Activated CD4-positive, alpha-beta T cell treated with anti-CD3 and anti-CD28 coated beads for 36 hours (primary cell): ENCODE measurements at regions of chr10 and their contacts with region 1.

Region 1: GRCh38 chr10:4131407-4132228 is 346.6 kb upstream of the KLF6 start:
- DNase-seq: peak; percentile 44
- ATAC-seq: peak; percentile 85
- H3K4me3 Mint-ChIP-seq: no peak overlapping the region
- H3K27ac Mint-ChIP-seq: no peak overlapping the region
- H3K4me1 Mint-ChIP-seq: peaks cover 41% of the 10 kb centered on the region
- H3K27me3 Mint-ChIP-seq: peaks cover 11% of the 10 kb centered on the region

Region 2: GRCh38 chr10:3197348-3198003 is 934.1 kb before region 1 on chr10:
- CTCF ChIA-PET with region 1: interaction called, 3 read pairs
- POLR2A ChIA-PET with region 1: interaction called, 3 read pairs
- intact Hi-C with region 1: loop called in 1 of 2 experiments (anchors 2 kb)
- DNase-seq: peak; percentile 92
- ATAC-seq: peak; percentile 90
- H3K4me3 Mint-ChIP-seq: no peak overlapping the region
- H3K27ac Mint-ChIP-seq: no peak overlapping the region
- H3K4me1 Mint-ChIP-seq: peaks cover 11% of the 10 kb centered on the region
- H3K27me3 Mint-ChIP-seq: peaks cover 60% of the 10 kb centered on the region

Region 3: DNA sequence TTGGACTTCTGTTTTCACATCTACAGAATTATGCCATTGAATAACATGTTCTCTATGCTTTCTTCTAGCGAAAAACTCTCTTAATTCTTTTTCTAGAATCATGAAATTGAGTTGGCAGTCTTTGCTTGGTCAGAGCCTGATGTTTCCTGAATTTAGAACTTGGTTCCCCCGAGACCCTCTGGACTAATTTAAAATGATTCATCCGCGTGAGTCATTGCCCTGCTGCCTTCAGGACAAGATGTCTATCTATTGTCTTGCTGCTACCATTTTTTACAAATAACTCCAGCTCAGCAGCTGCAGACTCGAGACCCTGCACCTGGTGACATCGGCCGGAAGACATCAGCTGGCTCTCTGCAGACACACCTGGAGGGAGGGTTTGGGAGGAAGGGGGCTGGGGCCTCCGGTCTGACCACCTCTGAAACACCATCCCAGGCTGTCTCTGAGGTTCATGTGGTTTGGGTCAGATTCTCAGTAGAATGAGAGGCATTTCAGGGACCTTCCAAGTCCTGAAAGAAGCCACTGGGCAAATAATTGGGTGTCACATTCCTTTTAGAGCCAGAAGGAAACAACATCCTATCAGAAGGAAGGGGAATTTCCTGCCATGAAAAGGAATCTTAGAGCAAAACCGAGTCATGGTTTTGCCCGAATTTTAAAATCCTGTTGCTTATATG is 325.7 kb before region 1 on chr10:
- CTCF ChIA-PET with region 1: no interaction called
- POLR2A ChIA-PET with region 1: interaction called, 4 read pairs
- intact Hi-C with region 1: loop called (anchors 1 to 2 kb)
- DNase-seq: peak; percentile 59
- ATAC-seq: no peak
- H3K4me3 Mint-ChIP-seq: peak overlapping the region; percentile 46
- H3K27ac Mint-ChIP-seq: no peak overlapping the region
- H3K4me1 Mint-ChIP-seq: peaks cover 63% of the 10 kb centered on the region
- H3K27me3 Mint-ChIP-seq: no peaks in the 10 kb centered on the region

Region 4: GRCh38 chr10:3873728-3874461 is 257.7 kb before region 1 on chr10:
- CTCF ChIA-PET with region 1: no interaction called
- POLR2A ChIA-PET with region 1: no interaction called
- intact Hi-C with region 1: loop called in 1 of 2 experiments (anchors 5 kb)
- DNase-seq: no peak
- ATAC-seq: peak; percentile 27
- H3K4me3 Mint-ChIP-seq: peak overlapping the region; percentile 15
- H3K27ac Mint-ChIP-seq: peak overlapping the region; percentile 89
- H3K4me1 Mint-ChIP-seq: peaks cover 65% of the 10 kb centered on the region
- H3K27me3 Mint-ChIP-seq: no peaks in the 10 kb centered on the region

Region 5: DNA sequence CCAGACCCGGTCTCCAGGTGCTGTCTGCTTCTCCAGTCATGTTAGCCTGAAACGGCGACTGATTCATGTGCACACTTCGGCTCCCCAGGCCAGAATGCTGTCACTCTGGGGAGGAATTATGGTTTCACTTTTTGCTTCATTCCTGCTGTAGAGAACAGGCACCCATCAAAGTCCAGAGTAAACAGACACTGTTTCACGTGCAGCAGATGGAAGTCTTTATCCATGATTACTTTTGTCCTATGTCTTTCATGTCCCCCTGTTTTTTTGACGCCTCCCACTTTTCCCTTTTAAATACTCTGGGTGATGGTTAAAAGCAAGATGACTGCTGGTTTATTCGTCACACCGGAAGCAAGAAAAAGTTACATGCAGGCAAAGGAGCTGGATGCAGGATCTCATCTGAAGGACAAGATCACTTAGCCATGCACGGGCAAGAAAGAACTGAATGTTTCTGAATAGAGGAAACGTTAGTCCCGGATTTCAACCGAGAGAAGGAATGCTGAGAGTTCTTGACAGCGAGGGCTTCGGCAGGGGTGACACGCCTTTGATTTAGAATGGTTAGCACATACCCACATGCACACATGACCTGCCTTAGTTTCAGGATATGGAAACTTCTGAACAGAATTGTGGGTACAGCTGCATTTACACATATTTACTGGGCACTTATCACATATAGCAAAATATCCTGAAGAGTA is 96.6 kb before region 1 on chr10:
- CTCF ChIA-PET with region 1: no interaction called
- POLR2A ChIA-PET with region 1: no interaction called
- intact Hi-C with region 1: loop called in 1 of 2 experiments (anchors 5 kb)
- DNase-seq: peak; percentile 64
- ATAC-seq: peak; percentile 63
- H3K4me3 Mint-ChIP-seq: peak overlapping the region; percentile 49
- H3K27ac Mint-ChIP-seq: peak overlapping the region; percentile 90
- H3K4me1 Mint-ChIP-seq: peaks cover 30% of the 10 kb centered on the region
- H3K27me3 Mint-ChIP-seq: no peaks in the 10 kb centered on the region

Region 6: DNA sequence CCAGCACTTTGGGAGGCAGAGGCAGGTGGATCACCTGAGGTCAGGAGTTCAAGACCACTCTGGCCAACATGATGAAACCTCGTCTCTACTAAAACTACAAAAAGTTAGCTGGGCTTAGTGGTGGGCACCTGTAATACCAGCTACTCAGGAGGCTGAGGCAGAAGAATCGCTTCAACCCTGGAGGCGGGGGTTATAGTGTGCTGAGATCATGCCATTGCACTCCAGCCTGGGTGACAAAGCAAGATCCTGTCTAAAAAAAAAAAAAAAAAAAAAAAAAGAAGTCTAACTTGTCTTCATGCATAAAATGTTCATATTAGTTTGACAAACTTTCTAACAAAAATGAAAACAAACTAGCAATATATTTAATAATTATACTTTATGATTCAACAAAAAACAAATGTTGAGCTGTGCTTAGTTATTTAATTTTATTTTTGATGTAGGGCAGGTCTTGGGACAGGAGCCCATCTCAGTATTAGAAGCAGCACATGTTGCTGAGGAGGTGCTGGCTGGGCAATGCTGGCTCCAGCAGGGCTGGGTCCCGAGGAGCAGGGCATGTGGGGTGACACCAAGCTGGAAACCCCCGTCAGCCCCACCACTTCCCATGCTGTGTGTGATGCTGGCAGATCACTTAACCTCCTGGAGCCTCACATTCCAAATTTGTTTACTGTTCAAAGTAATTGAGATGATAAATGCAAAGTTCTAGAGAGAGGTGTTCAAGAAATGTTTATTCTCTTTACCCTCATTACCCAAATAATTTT is 11.3 kb before region 1 on chr10:
- CTCF ChIA-PET with region 1: no interaction called
- POLR2A ChIA-PET with region 1: no interaction called
- intact Hi-C with region 1: no loop called
- DNase-seq: peak; percentile 24
- ATAC-seq: no peak
- H3K4me3 Mint-ChIP-seq: no peak overlapping the region
- H3K27ac Mint-ChIP-seq: no peak overlapping the region
- H3K4me1 Mint-ChIP-seq: peaks cover 12% of the 10 kb centered on the region
- H3K27me3 Mint-ChIP-seq: peaks cover 2% of the 10 kb centered on the region

Region 7: GRCh38 chr10:4333459-4333894 is 201.9 kb after region 1 on chr10:
- CTCF ChIA-PET with region 1: no interaction called
- POLR2A ChIA-PET with region 1: no interaction called
- intact Hi-C with region 1: loop called in 1 of 2 experiments (anchors 10 kb)
- DNase-seq: no peak
- ATAC-seq: no peak
- H3K4me3 Mint-ChIP-seq: no peak overlapping the region
- H3K27ac Mint-ChIP-seq: no peak overlapping the region
- H3K4me1 Mint-ChIP-seq: no peaks in the 10 kb centered on the region
- H3K27me3 Mint-ChIP-seq: no peaks in the 10 kb centered on the region